PC-3 (cell line): ENCODE measurements at regions of chr13 and their contacts with region 1.

Region 1: DNA sequence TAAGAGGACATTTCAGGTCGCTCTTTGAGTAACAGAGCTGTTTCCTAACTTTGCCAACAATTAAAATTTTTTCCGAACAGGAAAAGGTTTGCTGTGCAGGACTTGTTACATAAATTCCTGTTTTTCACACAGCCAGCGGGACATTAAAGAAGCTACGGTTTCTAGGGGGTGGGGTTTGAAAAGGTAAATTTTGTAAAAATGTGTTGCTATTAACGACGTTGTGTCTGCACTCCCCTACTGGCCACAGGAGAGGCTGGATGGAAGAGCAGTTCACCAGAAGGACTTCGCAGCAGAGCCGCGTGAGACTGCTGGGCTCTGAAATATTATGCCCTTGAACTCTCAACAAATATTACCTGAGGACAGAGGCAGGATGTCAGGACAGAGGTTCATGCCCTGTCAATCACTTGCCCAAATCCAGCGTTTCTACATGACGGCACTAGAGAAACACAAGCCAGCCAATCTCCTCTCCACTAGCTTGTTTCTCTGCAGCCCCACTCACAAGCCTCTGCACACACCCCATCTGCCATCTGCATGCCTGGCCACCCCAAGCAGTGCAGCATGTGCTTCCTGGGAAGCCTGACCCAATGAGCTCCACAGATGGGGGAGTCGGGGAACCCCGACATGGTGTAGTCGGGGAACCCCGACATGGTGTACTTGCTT is 102.0 kb downstream of the FOXO1 start:
- DNase-seq: no peak
- ATAC-seq: no peak
- H3K4me3 ChIP-seq: no peak overlapping the region
- H3K27ac ChIP-seq: no peak overlapping the region
- H3K4me1 ChIP-seq: no peaks in the 10 kb centered on the region
- H3K27me3 ChIP-seq: no peaks in the 10 kb centered on the region
- CTCF ChIP-seq: no peak

Region 2: GRCh38 chr13:40149611-40150274 is 414.7 kb before region 1 on chr13:
- CTCF ChIA-PET with region 1: no interaction called
- POLR2A ChIA-PET with region 1: no interaction called
- intact Hi-C with region 1: loop called (anchors 5 kb)
- DNase-seq: peak; percentile 48
- ATAC-seq: no peak; the same call in 1 of the 2 replicates
- H3K4me3 ChIP-seq: no peak overlapping the region
- H3K27ac ChIP-seq: no peak overlapping the region
- H3K4me1 ChIP-seq: peaks cover 22% of the 10 kb centered on the region
- H3K27me3 ChIP-seq: no peaks in the 10 kb centered on the region
- CTCF ChIP-seq: no peak

Region 3: GRCh38 chr13:40522282-40522681 is 42.2 kb before region 1 on chr13:
- CTCF ChIA-PET with region 1: no interaction called
- POLR2A ChIA-PET with region 1: no interaction called
- intact Hi-C with region 1: no loop called
- DNase-seq: no peak
- ATAC-seq: no peak
- H3K4me3 ChIP-seq: no peak overlapping the region
- H3K27ac ChIP-seq: no peak overlapping the region
- H3K4me1 ChIP-seq: no peaks in the 10 kb centered on the region
- H3K27me3 ChIP-seq: no peaks in the 10 kb centered on the region
- CTCF ChIP-seq: no peak